Heart right ventricle (tissue), 16 donors: ENCODE measurements at regions of chr18 and their contacts with region 1.

Region 1: DNA sequence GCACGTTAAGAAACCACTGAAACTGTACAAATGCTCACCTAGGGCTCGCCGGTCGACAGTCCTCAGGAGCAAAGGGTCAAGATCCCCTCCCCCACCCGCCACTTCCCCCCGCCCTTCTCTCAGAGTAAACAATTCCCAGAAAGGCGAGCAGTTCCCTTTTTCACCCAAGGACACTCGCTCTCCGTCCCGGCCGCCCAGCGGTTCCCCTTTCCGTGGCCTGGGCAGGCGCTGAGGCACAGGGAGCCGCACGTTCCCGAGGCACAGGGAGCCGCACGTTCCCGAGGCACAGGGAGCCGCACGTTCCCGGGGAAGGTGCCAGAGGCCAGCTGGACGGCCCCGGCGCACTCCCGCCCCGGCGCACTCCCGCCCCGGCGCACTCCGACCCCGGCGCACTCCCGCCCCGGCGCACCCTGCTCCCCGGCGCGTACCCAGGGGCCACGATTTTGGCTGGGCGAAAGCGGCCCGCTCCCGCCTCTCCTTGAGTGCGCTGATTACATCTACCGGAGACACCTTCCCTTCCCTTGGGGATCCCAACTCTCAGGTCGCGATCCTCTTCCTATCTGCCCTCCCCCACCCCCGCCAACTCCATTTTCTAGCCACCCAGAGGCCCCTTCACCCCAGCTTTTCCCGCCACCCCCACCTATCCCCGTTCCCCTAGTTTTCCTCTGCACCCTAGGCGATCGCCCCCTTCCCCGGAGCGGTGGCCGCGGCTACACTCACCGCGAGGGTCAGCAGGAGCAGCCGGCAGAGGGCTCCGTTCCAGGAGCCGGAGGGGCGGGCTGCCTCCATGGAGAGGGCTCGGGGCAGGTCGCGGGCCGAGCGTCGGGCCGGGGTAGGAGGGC is 817 bp downstream of the DSC2 start:
- DNase-seq: peak; percentile 66 to 82
- ATAC-seq: peak; percentile 84 to 97 (median 88)
- H3K4me3 ChIP-seq: peak overlapping the region; percentile 41 to 76 (median 72)
- H3K27ac ChIP-seq: peak overlapping the region; percentile 87 to 97 (median 90)
- H3K4me1 ChIP-seq: peaks cover 0 to 12% (median 3%) of the 10 kb centered on the region in 9 donors
- H3K27me3 ChIP-seq: peaks cover 0 to 8% (median 0%) of the 10 kb centered on the region in 7 donors
- CTCF ChIP-seq: peak in 3 of 9 donors; percentile 19 to 32 (median 32)

Region 2: GRCh38 chr18:31225668-31226067 is 124.3 kb after region 1 on chr18:
- intact Hi-C with region 1: loop called in 1 of 10 experiments (anchors 10 kb)
- DNase-seq: peak; percentile 30 to 63
- ATAC-seq: peak; percentile 85 to 97 (median 90)
- H3K4me3 ChIP-seq: no peak overlapping the region
- H3K27ac ChIP-seq: peak overlapping the region; percentile 53 to 92 (median 85)
- H3K4me1 ChIP-seq: peaks cover 0 to 30% (median 4%) of the 10 kb centered on the region in 9 donors
- H3K27me3 ChIP-seq: no peaks in the 10 kb centered on the region
- CTCF ChIP-seq: no peak

Region 3: DNA sequence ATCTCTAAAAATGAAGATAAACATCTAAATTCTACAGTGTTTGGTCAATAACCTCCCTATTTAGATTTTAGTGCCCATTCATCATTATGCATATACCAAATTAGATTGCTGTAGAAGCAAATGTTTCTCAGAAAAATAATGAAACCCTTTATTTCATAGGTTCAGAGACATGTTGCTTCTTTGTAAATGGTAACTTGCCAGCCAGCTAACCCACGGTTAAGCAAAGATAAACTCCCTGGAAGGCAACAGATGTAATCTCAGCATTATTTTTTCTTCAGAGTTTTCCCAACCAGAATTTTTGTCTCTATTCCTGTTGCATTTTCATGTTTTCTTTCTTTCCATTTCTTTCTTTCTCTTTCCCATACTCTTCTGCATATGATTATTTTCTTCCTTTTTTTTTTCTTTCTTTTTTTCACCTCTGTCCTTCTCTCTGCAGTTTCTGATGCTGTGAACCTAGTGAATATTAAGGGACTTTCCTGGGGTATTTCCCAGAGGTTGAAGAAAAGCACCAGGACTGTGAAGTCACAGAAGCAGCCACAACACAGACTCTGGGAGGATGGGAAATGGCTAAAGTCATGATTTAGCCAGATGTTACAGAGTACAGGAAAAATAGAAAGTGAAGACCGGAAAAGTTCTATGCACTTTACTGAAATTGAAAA is 166.5 kb after region 1 on chr18:
- intact Hi-C with region 1: loop called in 2 of 10 experiments (anchors 5 to 10 kb)
- DNase-seq: no peak
- ATAC-seq: no peak
- H3K4me3 ChIP-seq: no peak overlapping the region
- H3K27ac ChIP-seq: no peak overlapping the region
- H3K4me1 ChIP-seq: peaks cover 0 to 19% (median 12%) of the 10 kb centered on the region in 9 donors
- H3K27me3 ChIP-seq: no peaks in the 10 kb centered on the region
- CTCF ChIP-seq: no peak

Region 4: GRCh38 chr18:31497837-31498573 is 396.6 kb after region 1 on chr18 and contains the start of gene DSG2:
- intact Hi-C with region 1: loop called in 5 of 10 experiments (anchors 5 to 10 kb)
- DNase-seq: peak; percentile 51 to 74
- ATAC-seq: peak; percentile 89 to 99 (median 96)
- H3K4me3 ChIP-seq: peak within 1 kb of the TSS; percentile 32 to 78 (median 71)
- H3K27ac ChIP-seq: peak within 1 kb of the TSS; percentile 35 to 86 (median 74)
- H3K4me1 ChIP-seq: peaks cover 0 to 22% (median 5%) of the 10 kb centered on the region in 9 donors
- H3K27me3 ChIP-seq: peaks cover 0 to 44% (median 4%) of the 10 kb centered on the region in 7 donors
- CTCF ChIP-seq: no peak
- total RNA-seq, gene DSG2: 36.0 to 53.8 (median 41.4) TPM